ENCODE measurements at regions of chr20 and their contacts with region 1.

Region 1: DNA sequence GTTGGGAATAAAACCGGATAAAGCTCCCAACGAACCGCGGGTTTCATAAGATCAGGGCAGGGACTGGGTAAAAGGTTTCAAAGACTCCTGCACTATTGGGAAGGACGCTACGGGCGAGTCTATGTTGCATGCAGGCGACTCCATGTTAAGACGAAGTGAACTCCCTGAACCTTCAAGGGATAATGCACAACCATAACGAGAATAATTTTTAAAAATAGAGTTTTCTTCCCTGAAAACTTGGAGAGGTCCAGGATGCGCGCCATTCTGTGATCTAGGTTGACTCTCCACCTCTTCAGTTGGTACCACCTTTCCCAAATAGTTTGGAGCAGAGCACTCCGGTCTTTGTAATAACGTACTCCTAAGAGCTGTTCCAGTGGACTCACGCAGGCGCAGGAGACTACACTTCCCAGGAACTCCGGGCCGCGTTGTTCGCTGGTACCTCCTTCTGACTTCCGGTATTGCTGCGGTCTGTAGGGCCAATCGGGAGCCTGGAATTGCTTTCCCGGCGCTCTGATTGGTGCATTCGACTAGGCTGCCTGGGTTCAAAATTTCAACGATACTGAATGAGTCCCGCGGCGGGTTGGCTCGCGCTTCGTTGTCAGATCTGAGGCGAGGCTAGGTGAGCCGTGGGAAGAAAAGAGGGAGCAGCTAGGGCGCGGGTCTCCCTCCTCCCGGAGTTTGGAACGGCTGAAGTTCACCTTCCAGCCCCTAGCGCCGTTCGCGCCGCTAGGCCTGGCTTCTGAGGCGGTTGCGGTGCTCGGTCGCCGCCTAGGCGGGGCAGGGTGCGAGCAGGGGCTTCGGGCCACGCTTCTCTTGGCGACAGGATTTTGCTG is at the start of gene TPX2:
- DNase-seq: peak; percentile 91
- H3K4me3 Mint-ChIP-seq: no peak within 1 kb of the TSS
- H3K27ac Mint-ChIP-seq: no peak within 1 kb of the TSS
- H3K4me1 Mint-ChIP-seq: peaks cover 8% of the 10 kb centered on the region
- H3K27me3 Mint-ChIP-seq: peaks cover 10% of the 10 kb centered on the region

Region 2: GRCh38 chr20:31633339-31633914 is 105.5 kb before region 1 on chr20:
- CTCF ChIA-PET with region 1: interaction called, 12 read pairs
- DNase-seq: no peak
- H3K4me3 Mint-ChIP-seq: no peak overlapping the region
- H3K27ac Mint-ChIP-seq: no peak overlapping the region
- H3K4me1 Mint-ChIP-seq: no peaks in the 10 kb centered on the region
- H3K27me3 Mint-ChIP-seq: peaks cover 16% of the 10 kb centered on the region

Region 3: DNA sequence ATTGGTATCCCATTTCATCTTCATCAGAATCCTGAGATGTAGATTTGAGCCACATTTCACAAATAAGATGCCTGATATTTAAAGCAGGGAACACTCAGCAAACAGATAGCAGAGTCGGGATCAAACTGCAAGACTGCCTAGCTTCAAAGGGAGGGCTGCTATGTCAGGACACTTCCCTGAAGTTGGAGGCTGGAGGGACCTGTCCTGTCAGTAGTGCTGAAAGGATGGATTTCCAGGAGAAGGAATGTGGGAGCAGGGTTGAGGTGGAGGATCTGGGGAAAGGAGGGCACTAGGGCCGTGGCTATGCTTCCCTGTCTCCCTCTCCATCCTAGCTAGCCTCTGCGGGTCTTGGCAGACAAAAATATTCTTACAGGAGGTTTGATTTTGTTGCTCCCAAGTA is 69.1 kb before region 1 on chr20:
- CTCF ChIA-PET with region 1: no interaction called
- DNase-seq: no peak
- H3K4me3 Mint-ChIP-seq: no peak overlapping the region
- H3K27ac Mint-ChIP-seq: peak overlapping the region; percentile 56
- H3K4me1 Mint-ChIP-seq: peaks cover 87% of the 10 kb centered on the region
- H3K27me3 Mint-ChIP-seq: no peaks in the 10 kb centered on the region

Region 4: DNA sequence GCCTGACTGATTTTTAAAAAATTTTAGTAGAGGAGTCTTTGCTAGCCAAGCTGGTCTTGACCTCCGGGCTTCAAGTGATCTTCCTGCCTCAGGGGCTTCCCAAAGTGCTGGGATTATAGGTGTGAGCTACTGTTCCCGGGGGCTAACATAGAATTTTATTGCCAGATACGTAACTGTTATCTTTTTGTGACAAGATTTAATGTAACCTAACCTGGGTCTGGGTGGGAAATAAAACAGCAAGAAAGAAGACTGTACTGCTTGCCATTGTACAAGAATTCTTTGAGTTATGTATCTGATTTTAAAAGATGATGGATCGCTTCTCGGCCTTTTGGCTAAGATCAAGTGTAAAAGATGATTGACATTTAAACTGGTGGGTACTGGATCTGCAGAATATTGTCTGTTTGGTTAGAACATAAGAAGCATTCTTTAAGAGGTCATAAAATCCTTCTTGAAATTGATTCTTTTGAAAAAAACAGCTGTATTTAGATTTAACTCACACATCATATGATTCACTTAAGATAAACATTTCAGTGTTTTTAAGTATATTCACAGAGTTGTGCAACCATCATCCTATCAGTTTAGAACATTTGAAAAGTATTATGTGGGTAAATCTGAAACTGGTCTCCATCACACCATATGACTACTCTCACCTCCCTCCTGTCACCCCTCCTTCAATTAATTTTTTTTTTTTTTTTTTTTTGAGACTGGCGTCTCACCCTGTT is 21.7 kb after region 1 on chr20:
- CTCF ChIA-PET with region 1: no interaction called
- DNase-seq: no peak
- H3K4me3 Mint-ChIP-seq: no peak overlapping the region
- H3K27ac Mint-ChIP-seq: no peak overlapping the region
- H3K4me1 Mint-ChIP-seq: peaks cover 3% of the 10 kb centered on the region
- H3K27me3 Mint-ChIP-seq: no peaks in the 10 kb centered on the region

Region 5: GRCh38 chr20:31788578-31788977 is 49.6 kb after region 1 on chr20:
- CTCF ChIA-PET with region 1: no interaction called
- DNase-seq: no peak
- H3K4me3 Mint-ChIP-seq: no peak overlapping the region
- H3K27ac Mint-ChIP-seq: no peak overlapping the region
- H3K4me1 Mint-ChIP-seq: no peaks in the 10 kb centered on the region
- H3K27me3 Mint-ChIP-seq: no peaks in the 10 kb centered on the region